Head of caudate nucleus (tissue), 42 donors: ENCODE measurements at regions of chr17 and their contacts with region 1.

Region 1: DNA sequence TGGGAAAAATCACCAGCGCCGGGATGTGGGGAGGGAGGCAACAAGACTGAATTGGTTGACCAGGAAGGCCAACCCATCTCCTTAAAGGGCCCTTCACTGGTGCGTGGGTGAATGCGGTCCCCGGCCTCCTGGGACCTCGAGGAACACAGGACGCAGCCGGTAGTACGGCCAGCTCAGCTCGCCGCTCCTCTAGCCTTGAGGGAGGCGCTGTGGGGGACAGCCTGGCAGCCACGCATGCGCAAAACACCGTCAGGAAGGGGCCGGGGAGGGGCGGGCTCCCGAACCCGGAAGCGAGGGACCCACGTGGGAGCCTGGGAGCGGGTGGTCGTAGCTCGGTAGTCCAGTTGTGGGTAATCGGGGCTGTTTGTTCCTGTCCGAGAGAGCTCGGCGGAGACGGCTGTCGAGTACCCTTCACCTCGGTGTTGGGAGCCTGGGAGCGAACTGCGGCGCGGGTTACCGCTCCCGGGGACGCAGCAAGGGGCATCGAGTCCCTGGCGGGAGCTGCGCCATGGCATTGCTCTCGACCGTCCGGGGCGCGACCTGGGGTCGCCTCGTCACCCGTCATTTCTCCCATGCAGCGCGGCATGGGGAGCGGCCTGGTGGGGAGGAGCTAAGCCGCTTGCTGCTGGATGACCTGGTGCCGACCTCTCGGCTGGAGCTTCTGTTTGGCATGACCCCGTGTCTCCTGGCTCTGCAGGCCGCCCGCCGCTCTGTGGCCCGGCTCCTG is at the start of gene MRM1:
- DNase-seq: peak; percentile 90 to 98 (median 95)

Region 2: DNA sequence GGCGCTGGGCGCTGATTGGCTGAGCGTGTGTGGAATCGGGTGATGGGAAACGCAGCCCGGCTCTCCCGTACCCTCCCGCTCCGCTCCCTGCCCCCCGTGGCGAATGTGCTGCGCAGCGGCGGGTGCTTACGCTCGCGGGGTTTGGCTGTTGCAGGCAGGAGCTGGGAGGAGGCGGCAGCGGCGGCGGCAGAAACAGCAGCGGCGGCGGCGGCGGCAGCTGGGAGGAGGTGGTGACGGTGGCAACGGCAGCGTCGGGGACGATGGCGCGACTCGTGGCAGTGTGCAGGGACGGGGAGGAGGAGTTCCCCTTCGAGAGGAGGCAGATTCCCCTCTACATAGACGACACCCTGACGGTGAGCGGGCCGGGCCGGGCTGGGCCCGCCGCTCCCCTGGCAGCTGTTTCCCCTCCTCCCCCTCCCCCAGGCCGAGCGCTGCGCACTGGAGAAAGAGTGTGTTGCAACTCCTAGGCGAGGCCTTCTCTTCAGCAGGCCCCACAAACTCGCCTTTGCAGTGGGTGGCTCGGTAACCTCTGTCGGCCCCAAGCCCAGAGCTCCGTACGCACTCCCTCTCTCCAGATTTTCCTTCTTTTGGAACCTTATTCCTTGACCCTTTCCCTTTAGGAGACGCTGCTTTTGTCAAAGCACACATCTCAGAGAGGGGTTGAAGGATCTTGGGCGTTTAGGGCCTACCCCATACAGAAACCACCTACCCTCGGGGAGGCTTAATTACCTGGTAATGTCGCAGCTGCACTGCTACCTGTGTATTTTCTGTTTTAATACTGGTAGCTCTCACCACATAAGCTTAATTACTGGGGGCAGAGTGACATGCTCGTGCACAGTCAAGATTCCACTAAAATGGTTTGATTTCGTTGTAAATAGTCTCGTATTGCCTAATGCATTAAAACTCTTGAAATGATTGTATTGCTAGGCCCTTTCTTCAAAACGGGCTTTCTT is 55.7 kb before region 1 on chr17:
- intact Hi-C with region 1: loop called (anchors 1 kb)
- DNase-seq: peak; percentile 91 to 99 (median 98)

Region 3: GRCh38 chr17:37609170-37610040 is 1007.9 kb after region 1 on chr17 and contains the start of gene SYNRG:
- intact Hi-C with region 1: loop called (anchors 2 kb)
- DNase-seq: peak; percentile 94 to 99 (median 97)